ENCODE measurements at regions of chr7 and their contacts with region 1.

Region 1: GRCh38 chr7:37201003-37201875 is 247.4 kb downstream of the ELMO1 start:
- DNase-seq: peak; percentile 68
- ATAC-seq: peak; percentile 81
- H3K4me3 ChIP-seq: no peak overlapping the region
- H3K27ac ChIP-seq: no peak overlapping the region
- H3K4me1 ChIP-seq: no peaks in the 10 kb centered on the region
- H3K27me3 ChIP-seq: no peaks in the 10 kb centered on the region
- CTCF ChIP-seq: peak; percentile 87
- POLR2A ChIP-seq: no peak
- RAD21 ChIP-seq: peak; percentile 52

Region 2: DNA sequence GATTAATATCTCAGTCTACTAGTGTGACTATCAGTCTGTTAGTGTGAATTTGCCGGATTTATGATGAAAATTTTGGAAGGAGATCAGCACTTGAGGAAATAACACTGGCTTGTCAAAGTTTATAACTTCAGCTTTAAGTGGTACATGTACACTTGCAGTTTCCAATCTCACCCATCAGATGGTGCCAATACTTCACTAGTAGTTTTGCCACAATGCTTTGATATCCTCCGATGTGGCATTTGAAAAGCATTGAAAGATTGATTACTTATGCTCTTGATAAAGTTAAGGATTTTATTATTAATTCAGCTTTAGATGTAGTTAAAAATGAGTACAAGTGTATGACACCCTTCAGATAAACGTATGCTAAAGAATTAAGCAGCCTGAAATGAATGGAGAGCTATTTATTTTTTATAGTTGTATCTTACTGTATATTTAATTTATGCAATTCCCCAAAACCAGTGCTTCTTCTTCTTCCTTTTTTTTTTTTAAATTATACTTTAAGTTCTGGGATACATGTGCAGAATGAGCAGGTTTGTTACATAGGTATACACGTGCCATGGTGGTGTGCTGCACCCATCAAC is 713.4 kb before region 1 on chr7:
- CTCF ChIA-PET with region 1: interaction called, 8 read pairs
- POLR2A ChIA-PET with region 1: no interaction called
- dilution Hi-C with region 1: no loop called
- in situ Hi-C with region 1: loop called (anchors 10 kb)
- intact Hi-C with region 1: loop called (anchors 1 kb)
- DNase-seq: peak; percentile 68
- ATAC-seq: peak; percentile 85
- H3K4me3 ChIP-seq: no peak overlapping the region
- H3K27ac ChIP-seq: no peak overlapping the region
- H3K4me1 ChIP-seq: no peaks in the 10 kb centered on the region
- H3K27me3 ChIP-seq: peaks cover 19% of the 10 kb centered on the region
- CTCF ChIP-seq: peak; percentile 88
- POLR2A ChIP-seq: no peak
- RAD21 ChIP-seq: peak; percentile 94

Region 3: GRCh38 chr7:36686499-36686898 is 514.7 kb before region 1 on chr7:
- CTCF ChIA-PET with region 1: no interaction called
- POLR2A ChIA-PET with region 1: no interaction called
- dilution Hi-C with region 1: no loop called
- in situ Hi-C with region 1: loop called (anchors 25 kb)
- intact Hi-C with region 1: no loop called
- DNase-seq: peak; percentile 41
- ATAC-seq: no peak
- H3K4me3 ChIP-seq: no peak overlapping the region
- H3K27ac ChIP-seq: no peak overlapping the region
- H3K4me1 ChIP-seq: no peaks in the 10 kb centered on the region
- H3K27me3 ChIP-seq: peaks cover 2% of the 10 kb centered on the region; the same call in 1 of the 2 replicates
- CTCF ChIP-seq: no peak
- POLR2A ChIP-seq: no peak
- RAD21 ChIP-seq: no peak

Region 4: DNA sequence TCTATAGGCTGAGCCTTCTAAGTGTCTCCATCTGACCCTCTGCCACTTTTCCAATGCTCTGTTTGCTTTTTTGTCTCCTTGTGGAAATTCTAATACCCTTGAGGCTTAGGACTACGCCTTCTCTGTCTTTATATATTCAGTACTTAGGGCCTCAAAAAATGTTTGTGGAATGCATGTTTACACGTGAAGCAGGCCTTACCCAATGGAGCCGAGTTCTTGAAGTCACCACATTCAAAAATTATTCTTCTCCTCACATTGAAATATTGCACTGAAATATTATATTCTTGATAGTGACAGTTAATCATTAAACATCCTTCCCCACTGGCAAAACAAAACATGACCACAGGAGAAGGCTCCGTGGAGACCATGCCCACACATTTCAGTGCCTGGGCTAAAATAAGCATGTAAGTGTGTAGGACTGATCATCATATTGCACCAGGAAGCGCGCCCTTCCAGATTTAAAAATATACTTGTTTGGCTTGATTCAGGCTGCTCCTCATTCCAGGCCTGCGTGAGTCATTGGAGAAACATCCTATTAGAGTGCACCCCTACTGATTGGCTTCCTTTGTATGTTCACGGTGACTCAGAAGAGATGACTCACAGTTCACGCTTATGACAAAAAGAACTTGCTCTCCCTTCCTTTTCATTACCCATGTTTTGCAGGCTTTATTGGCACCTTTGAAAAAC is 169.5 kb before region 1 on chr7:
- CTCF ChIA-PET with region 1: interaction called, 8 read pairs
- POLR2A ChIA-PET with region 1: no interaction called
- dilution Hi-C with region 1: no loop called
- in situ Hi-C with region 1: no loop called
- intact Hi-C with region 1: loop called (anchors 5 kb)
- DNase-seq: peak; percentile 100
- ATAC-seq: peak; percentile 95
- H3K4me3 ChIP-seq: no peak overlapping the region
- H3K27ac ChIP-seq: peak overlapping the region; percentile 60
- H3K4me1 ChIP-seq: peaks cover 13% of the 10 kb centered on the region
- H3K27me3 ChIP-seq: no peaks in the 10 kb centered on the region
- CTCF ChIP-seq: no peak
- POLR2A ChIP-seq: no peak
- RAD21 ChIP-seq: no peak

Region 5: GRCh38 chr7:37304921-37305320 is 103.7 kb after region 1 on chr7:
- CTCF ChIA-PET with region 1: no interaction called
- POLR2A ChIA-PET with region 1: no interaction called
- dilution Hi-C with region 1: no loop called
- in situ Hi-C with region 1: no loop called
- intact Hi-C with region 1: no loop called
- DNase-seq: no peak
- ATAC-seq: no peak
- H3K4me3 ChIP-seq: no peak overlapping the region
- H3K27ac ChIP-seq: no peak overlapping the region
- H3K4me1 ChIP-seq: no peaks in the 10 kb centered on the region
- H3K27me3 ChIP-seq: no peaks in the 10 kb centered on the region
- CTCF ChIP-seq: no peak
- POLR2A ChIP-seq: no peak
- RAD21 ChIP-seq: no peak

Region 6: GRCh38 chr7:37408291-37409228 is 207.3 kb after region 1 on chr7:
- CTCF ChIA-PET with region 1: no interaction called
- POLR2A ChIA-PET with region 1: no interaction called
- dilution Hi-C with region 1: no loop called
- in situ Hi-C with region 1: no loop called
- intact Hi-C with region 1: no loop called
- DNase-seq: no peak
- ATAC-seq: no peak
- H3K4me3 ChIP-seq: no peak overlapping the region
- H3K27ac ChIP-seq: no peak overlapping the region
- H3K4me1 ChIP-seq: no peaks in the 10 kb centered on the region
- H3K27me3 ChIP-seq: no peaks in the 10 kb centered on the region
- CTCF ChIP-seq: no peak
- POLR2A ChIP-seq: no peak
- RAD21 ChIP-seq: no peak